Dorsolateral prefrontal cortex (tissue), 120 donors: ENCODE measurements at regions of chr17 and their contacts with region 1.

Region 1: GRCh38 chr17:17681187-17681848 is at the start of gene RAI1:
- DNase-seq: peak in 7 of 10 donors; percentile 47 to 83 (median 71)
- H3K4me3 ChIP-seq: peak within 1 kb of the TSS; percentile 43 to 92 (median 78)
- H3K27ac ChIP-seq: peak within 1 kb of the TSS; percentile 30 to 97 (median 90)
- H3K27me3 ChIP-seq: no peaks in the 10 kb centered on the region
- CTCF ChIP-seq: peak in 54 of 56 donors; percentile 13 to 97 (median 68)
- total RNA-seq, gene RAI1: 36.4 to 86.1 (median 56.3) TPM

Region 2: GRCh38 chr17:17723354-17724261 is 42.3 kb after region 1 on chr17:
- intact Hi-C with region 1: loop called (anchors 5 kb)
- DNase-seq: peak in 4 of 10 donors; percentile 50 to 62 (median 58)
- H3K4me3 ChIP-seq: peak overlapping the region; percentile 50 to 81 (median 72)
- H3K27ac ChIP-seq: peak overlapping the region in 54 of 59 donors; percentile 17 to 93 (median 78)
- H3K27me3 ChIP-seq: no peaks in the 10 kb centered on the region
- CTCF ChIP-seq: no peak

Region 3: DNA sequence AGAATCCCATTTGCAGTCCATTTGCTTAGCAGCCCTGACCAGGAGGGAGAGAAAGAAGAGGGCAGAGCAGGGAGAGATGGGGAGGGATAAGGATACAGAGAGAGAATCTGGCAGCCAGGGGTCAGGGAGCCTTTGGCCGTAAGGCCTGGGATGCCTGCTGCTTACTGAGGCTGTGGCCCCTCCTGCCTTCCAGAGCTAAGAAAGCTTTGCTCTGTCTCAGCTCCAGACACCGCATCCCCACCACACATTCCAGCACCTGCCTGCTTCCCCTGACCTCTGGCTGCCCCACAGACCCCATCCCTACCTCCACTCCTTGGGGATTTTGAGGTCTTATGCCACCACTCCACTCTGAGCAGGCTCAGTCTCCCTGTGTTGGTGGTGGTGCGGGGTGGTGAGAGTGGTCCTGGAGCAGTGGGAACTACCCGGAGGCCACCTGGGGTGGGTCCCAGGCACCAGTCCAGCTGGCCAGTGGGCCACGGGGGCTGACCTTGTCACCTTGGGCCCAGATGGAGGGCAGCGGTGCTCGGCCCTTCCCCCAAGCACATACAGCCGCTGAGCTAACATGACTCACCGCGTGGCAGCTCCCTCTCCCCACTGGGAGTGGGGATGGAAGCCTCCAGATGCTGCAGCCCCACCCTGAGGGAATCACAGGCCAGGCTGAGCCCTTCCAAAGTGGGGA is 58.2 kb after region 1 on chr17:
- intact Hi-C with region 1: loop called in 1 of 2 experiments (anchors 2 kb)
- DNase-seq: peak in 9 of 10 donors; percentile 52 to 90 (median 78)
- H3K4me3 ChIP-seq: peak overlapping the region in 53 of 59 donors; percentile 2 to 73 (median 52)
- H3K27ac ChIP-seq: peak overlapping the region; percentile 85 to 100 (median 98)
- H3K27me3 ChIP-seq: no peaks in the 10 kb centered on the region
- CTCF ChIP-seq: peak in 5 of 56 donors; percentile 9 to 34 (median 22)

Region 4: GRCh38 chr17:17792551-17793377 is 111.4 kb after region 1 on chr17:
- intact Hi-C with region 1: loop called in 1 of 2 experiments (anchors 5 kb)
- DNase-seq: peak in 9 of 10 donors; percentile 58 to 78 (median 73)
- H3K4me3 ChIP-seq: peak overlapping the region in 17 of 59 donors; percentile 0 to 36 (median 23)
- H3K27ac ChIP-seq: peak overlapping the region; percentile 55 to 96 (median 85)
- H3K27me3 ChIP-seq: no peaks in the 10 kb centered on the region
- CTCF ChIP-seq: peak in 40 of 56 donors; percentile 11 to 52 (median 22)

Region 5: GRCh38 chr17:17836250-17836817 is 155.0 kb after region 1 on chr17:
- intact Hi-C with region 1: loop called in 1 of 2 experiments (anchors 5 kb)
- DNase-seq: peak; percentile 98 to 99 (median 99)
- H3K4me3 ChIP-seq: peak overlapping the region; percentile 77 to 99 (median 92)
- H3K27ac ChIP-seq: peak overlapping the region; percentile 91 to 100 (median 100)
- H3K27me3 ChIP-seq: no peaks in the 10 kb centered on the region
- CTCF ChIP-seq: peak in 12 of 56 donors; percentile 9 to 35 (median 20)

Region 6: DNA sequence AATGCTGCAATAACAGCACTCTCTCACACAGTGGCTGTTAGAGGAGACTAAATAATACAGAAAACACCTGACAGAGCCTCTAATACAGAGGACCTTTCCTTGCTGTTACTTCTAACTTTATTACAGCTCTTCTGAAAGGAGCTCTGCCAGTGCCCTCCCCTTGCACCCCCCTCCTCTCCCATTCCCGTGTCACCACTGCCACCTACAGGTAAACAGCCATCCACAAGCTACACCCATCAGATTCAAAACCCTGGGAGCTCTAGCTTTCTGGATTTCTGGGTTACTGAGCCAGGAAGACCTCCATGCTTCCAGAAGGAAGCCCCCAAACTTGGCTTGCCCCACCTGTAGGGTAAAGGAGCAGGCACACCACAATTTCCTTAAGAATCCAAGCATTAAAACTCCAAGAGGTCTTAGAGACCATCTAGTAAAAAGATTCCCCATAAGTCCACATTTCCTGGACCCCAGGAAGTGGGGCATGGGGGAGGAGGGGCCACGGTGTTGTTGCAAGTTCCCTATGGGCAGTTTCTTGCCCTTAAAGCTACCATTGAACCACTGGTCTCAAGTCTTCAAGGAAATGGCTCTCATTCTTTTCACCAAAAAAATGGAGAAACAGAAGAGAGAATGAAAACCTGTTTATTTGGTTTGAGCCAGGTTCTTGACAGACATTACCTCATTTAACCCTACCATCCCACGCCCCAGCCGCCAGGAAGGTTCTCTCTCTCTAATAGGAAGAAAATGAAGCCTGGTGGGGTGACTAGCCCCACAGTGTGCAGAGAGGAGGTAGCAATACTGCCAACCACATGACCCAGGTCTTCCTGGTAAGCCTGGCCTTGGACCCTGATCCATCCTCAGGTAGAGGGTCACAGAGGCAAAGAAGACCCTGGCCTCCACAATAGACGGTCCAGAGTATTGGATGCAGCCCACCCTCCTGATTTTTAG is 238.1 kb after region 1 on chr17:
- intact Hi-C with region 1: loop called (anchors 5 kb)
- DNase-seq: peak; percentile 40 to 81 (median 78)
- H3K4me3 ChIP-seq: no peak overlapping the region
- H3K27ac ChIP-seq: peak overlapping the region in 52 of 59 donors; percentile 24 to 99 (median 90)
- H3K27me3 ChIP-seq: no peaks in the 10 kb centered on the region
- CTCF ChIP-seq: peak in 55 of 56 donors; percentile 33 to 88 (median 74)

Region 7: DNA sequence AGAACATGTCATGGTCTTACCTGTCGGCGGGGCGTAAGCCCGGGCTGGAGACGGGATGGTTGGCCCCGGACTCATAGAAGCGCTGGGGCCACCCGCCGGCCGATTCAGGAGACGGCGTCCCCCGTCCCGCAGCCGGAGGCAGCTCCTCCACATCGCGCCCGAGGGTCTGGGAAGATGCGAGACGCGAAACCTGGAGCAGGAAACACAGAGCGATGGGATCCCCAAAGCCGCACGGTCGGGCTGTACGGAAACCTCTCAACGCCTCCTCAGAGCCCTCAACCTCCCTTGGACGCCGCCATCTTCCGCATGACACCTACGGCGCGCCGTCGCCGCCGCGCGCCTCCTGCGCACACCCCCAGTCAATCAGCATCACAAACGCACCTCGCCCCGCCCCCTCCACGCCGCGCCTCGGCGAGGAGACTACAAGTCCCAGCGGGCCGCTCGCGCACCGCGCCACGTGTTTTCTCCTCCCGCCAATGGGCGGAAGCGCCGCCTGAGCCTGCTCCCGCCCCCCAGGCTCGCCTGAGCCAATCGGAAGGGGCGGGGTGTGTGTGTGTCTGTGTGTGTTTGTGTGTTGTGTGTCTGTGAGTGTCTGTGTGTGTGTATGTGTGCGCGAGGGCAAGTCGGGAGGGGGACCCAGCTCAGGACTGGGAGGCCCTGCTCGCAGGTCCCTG is 357.7 kb after region 1 on chr17 and contains the starts of genes ATPAF2 and GID4:
- intact Hi-C with region 1: loop called (anchors 2 to 5 kb)
- DNase-seq: peak; percentile 99 to 100 (median 100)
- H3K4me3 ChIP-seq: peak within 1 kb of the TSS; percentile 67 to 100 (median 94)
- H3K27ac ChIP-seq: peak within 1 kb of the TSS in 57 of 59 donors; percentile 49 to 93 (median 84)
- H3K27me3 ChIP-seq: no peaks in the 10 kb centered on the region
- CTCF ChIP-seq: peak in 33 of 56 donors; percentile 13 to 56 (median 28)
- total RNA-seq, gene ATPAF2: 23.1 to 61.4 (median 36.3) TPM
- total RNA-seq, gene GID4: 10.2 to 20.5 (median 15.2) TPM